ENCODE measurements at regions of chr14 and their contacts with region 1.

Region 1: GRCh38 chr14:46279327-46279726 is 372.3 kb downstream of the RPL10L start:
- DNase-seq: no peak
- ATAC-seq: peak; percentile 50
- H3K4me3 ChIP-seq: no peak overlapping the region
- H3K27ac ChIP-seq: no peak overlapping the region
- H3K4me1 ChIP-seq: no peaks in the 10 kb centered on the region
- H3K27me3 ChIP-seq: no peaks in the 10 kb centered on the region
- CTCF ChIP-seq: no peak
- EP300 ChIP-seq: no peak
- POLR2A ChIP-seq: no peak
- RAD21 ChIP-seq: no peak

Region 2: GRCh38 chr14:46259536-46259935 is 19.8 kb before region 1 on chr14:
- CTCF ChIA-PET with region 1: no interaction called
- POLR2A ChIA-PET with region 1: interaction called, 3 read pairs
- RAD21 ChIA-PET with region 1: interaction called, 4 read pairs
- SMC1A ChIA-PET with region 1: interaction called, 12 read pairs
- in situ Hi-C with region 1: no loop called
- intact Hi-C with region 1: no loop called
- DNase-seq: no peak
- ATAC-seq: peak; percentile 51
- H3K4me3 ChIP-seq: no peak overlapping the region
- H3K27ac ChIP-seq: no peak overlapping the region
- H3K4me1 ChIP-seq: no peaks in the 10 kb centered on the region
- H3K27me3 ChIP-seq: no peaks in the 10 kb centered on the region
- CTCF ChIP-seq: peak in 1 of 3 experiments; percentile 8; a peak in 1 of 6 replicates
- EP300 ChIP-seq: no peak
- POLR2A ChIP-seq: no peak
- RAD21 ChIP-seq: no peak

Region 3: GRCh38 chr14:46571970-46572369 is 292.6 kb after region 1 on chr14:
- CTCF ChIA-PET with region 1: no interaction called
- POLR2A ChIA-PET with region 1: no interaction called
- RAD21 ChIA-PET with region 1: no interaction called
- SMC1A ChIA-PET with region 1: no interaction called
- in situ Hi-C with region 1: no loop called
- intact Hi-C with region 1: no loop called
- DNase-seq: no peak
- ATAC-seq: no peak
- H3K4me3 ChIP-seq: no peak overlapping the region
- H3K27ac ChIP-seq: no peak overlapping the region
- H3K4me1 ChIP-seq: no peaks in the 10 kb centered on the region
- H3K27me3 ChIP-seq: no peaks in the 10 kb centered on the region
- CTCF ChIP-seq: no peak
- EP300 ChIP-seq: no peak
- POLR2A ChIP-seq: no peak
- RAD21 ChIP-seq: no peak

Measured in GM12878 (cell line).